ENCODE measurements at regions of chr5 and their contacts with region 1.

Region 1: DNA sequence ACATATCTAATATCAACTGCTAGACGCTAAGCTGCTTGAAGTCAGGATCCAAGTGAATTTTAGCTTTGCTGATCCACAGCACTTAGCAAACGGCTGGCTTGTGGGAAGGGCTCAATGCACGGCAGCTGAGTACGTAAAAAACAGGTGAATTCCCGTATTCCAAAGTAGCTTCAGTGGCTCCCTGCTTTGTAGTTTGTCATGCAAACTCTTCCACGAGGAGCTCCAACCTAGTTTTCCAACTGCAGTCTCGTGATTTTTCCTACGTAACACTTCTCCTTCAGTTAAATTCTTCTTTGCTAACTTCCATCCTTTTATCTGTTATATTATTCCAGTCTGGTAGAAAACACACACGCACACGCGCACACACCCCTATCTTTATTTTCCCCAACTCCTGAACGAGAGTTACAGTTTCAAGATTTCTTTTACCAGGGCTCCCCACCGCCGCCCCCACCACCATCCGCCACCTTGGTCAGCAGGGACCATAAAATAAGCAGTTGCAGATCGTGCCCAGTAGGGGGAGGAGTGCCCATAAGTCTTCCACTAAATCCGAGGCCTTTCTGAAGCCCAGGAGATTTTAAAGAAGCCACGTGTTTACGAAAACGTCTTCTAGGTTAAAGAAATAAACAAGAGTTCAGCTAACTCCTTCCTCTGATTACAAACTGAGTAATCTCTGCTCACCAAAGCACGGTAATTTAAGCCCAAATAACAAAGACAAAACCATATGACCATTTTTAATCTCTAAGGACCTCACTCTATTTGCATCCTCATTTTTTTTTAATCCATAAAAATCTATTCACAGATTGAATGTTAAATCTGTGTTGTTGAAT is 34.8 kb upstream of the TRIO start:
- DNase-seq: peak; percentile 39 to 52
- ATAC-seq: peak; percentile 85 to 90
- H3K4me3 ChIP-seq: peak overlapping the region in 1 of 4 donors; percentile 4
- H3K27ac ChIP-seq: peak overlapping the region in 1 of 4 donors; percentile 10
- H3K4me1 ChIP-seq: no peaks in the 10 kb centered on the region
- H3K27me3 ChIP-seq: no peaks in the 10 kb centered on the region
- CTCF ChIP-seq: peak; percentile 49 to 85 (median 66)
- POLR2A ChIP-seq: no peak

Region 2: GRCh38 chr5:14054965-14055963 is 53.1 kb before region 1 on chr5:
- in situ Hi-C with region 1: no loop called
- intact Hi-C with region 1: no loop called
- DNase-seq: no peak
- ATAC-seq: no peak
- H3K4me3 ChIP-seq: no peak overlapping the region
- H3K27ac ChIP-seq: no peak overlapping the region
- H3K4me1 ChIP-seq: no peaks in the 10 kb centered on the region
- H3K27me3 ChIP-seq: no peaks in the 10 kb centered on the region
- CTCF ChIP-seq: no peak
- POLR2A ChIP-seq: no peak

Region 3: DNA sequence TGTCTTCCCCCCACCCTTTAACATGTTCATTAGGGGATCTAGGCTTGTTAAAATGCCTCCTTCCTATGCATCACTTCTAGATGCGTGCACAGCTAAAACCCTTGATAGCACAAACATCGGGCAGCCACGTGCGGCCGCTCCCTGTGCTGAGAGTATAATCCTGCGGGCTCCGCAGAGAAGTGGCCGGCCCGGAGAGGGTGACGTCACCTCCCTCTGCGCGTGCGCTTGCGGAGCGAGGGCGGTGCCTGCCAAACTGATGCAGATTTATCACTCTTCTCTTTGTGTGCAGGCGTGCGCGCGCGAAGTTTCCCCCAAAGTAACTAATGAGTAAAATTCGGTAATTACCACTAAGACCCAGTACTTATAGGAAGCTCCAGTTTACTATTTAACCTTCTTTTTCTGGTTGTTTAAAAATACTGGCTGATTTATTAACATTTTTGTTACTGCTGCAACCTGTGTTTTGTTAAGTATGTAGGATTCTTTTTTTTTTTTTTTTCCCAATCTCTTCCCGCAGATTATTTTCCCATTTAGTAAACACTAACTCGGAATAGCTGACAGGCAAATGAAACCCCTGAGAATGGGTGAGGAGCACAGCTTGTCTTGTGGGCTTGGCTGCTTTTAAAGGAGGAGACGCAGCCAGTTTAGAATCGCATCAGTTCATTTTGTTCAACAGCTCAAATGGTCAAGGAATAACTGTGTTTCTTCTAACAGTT is 156.4 kb after region 1 on chr5:
- in situ Hi-C with region 1: loop called in 3 of 4 experiments (anchors 5 to 10 kb)
- intact Hi-C with region 1: no loop called
- DNase-seq: peak; percentile 79 to 85
- ATAC-seq: peak; percentile 71 to 73
- H3K4me3 ChIP-seq: peak overlapping the region; percentile 19 to 52 (median 38)
- H3K27ac ChIP-seq: peak overlapping the region in 2 of 4 donors; percentile 27 to 51
- H3K4me1 ChIP-seq: peaks cover 43 to 44% of the 10 kb centered on the region in 2 donors
- H3K27me3 ChIP-seq: no peaks in the 10 kb centered on the region
- CTCF ChIP-seq: no peak
- POLR2A ChIP-seq: peak; percentile 37 to 46

Region 4: DNA sequence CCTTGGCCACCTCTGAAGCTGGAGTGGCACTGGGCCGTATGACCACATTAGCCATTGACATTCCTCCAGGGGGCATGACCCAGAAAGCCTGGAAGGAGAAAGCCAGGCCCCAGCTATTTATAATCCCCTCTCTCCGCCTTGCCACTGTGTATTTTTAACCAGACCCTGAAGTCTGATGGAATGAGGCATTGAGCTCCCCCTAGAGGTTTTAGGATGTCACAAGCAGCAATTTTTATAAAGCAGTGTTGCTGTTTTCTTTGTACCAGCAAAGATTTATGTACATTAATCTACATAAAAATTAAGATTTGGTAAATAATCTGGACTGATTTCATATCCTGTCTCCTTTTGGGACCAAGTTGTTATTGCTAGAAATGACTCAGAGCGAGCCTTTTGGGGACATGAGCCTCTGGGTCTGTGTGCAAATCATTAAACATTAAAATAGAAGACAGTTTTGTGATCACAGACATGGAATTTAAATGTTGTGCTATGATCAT is 161.9 kb after region 1 on chr5:
- in situ Hi-C with region 1: loop called (anchors 5 to 10 kb)
- intact Hi-C with region 1: loop called (anchors 1 kb)
- DNase-seq: peak; percentile 40 to 81
- ATAC-seq: peak; percentile 85 to 91
- H3K4me3 ChIP-seq: no peak overlapping the region
- H3K27ac ChIP-seq: peak overlapping the region; percentile 64 to 85 (median 78)
- H3K4me1 ChIP-seq: peaks cover 31 to 37% of the 10 kb centered on the region in 2 donors
- H3K27me3 ChIP-seq: no peaks in the 10 kb centered on the region
- CTCF ChIP-seq: peak; percentile 76 to 85 (median 81)
- POLR2A ChIP-seq: no peak

Region 5: GRCh38 chr5:14351845-14352712 is 243.7 kb after region 1 on chr5:
- in situ Hi-C with region 1: no loop called
- intact Hi-C with region 1: loop called (anchors 5 kb)
- DNase-seq: peak; percentile 19 to 57
- ATAC-seq: peak; percentile 78 to 94
- H3K4me3 ChIP-seq: no peak overlapping the region
- H3K27ac ChIP-seq: no peak overlapping the region
- H3K4me1 ChIP-seq: no peaks in the 10 kb centered on the region
- H3K27me3 ChIP-seq: no peaks in the 10 kb centered on the region
- CTCF ChIP-seq: peak; percentile 69 to 96 (median 79)
- POLR2A ChIP-seq: no peak

Region 6: GRCh38 chr5:14664302-14665100 is 556.1 kb after region 1 on chr5 and contains the start of gene OTULIN:
- in situ Hi-C with region 1: loop called in 1 of 4 experiments (anchors 25 kb)
- intact Hi-C with region 1: no loop called
- DNase-seq: peak; percentile 78 to 85
- ATAC-seq: peak; percentile 93 to 94
- H3K4me3 ChIP-seq: peak within 1 kb of the TSS; percentile 54 to 83 (median 70)
- H3K27ac ChIP-seq: peak within 1 kb of the TSS; percentile 81 to 90 (median 86)
- H3K4me1 ChIP-seq: peaks cover 26 to 31% of the 10 kb centered on the region in 2 donors
- H3K27me3 ChIP-seq: no peaks in the 10 kb centered on the region
- CTCF ChIP-seq: peak in 1 of 5 experiments; percentile 8
- POLR2A ChIP-seq: peak; percentile 92 to 95
- total RNA-seq, gene OTULIN: 15.1 to 28.3 (median 20.2) TPM